Heart left ventricle (tissue), 16 donors: ENCODE measurements at regions of chr11 and their contacts with region 1.

Region 1: GRCh38 chr11:112086422-112087191 is at the starts of genes SDHD and TIMM8B:
- DNase-seq: peak; percentile 96 to 97 (median 96)
- ATAC-seq: peak; percentile 93 to 97 (median 94)
- H3K4me3 ChIP-seq: peak within 1 kb of the TSS; percentile 74 to 96 (median 90)
- H3K27ac ChIP-seq: peak within 1 kb of the TSS; percentile 55 to 95 (median 88)
- H3K4me1 ChIP-seq: peaks cover 3 to 50% (median 38%) of the 10 kb centered on the region in 12 donors
- H3K27me3 ChIP-seq: no peaks in the 10 kb centered on the region
- CTCF ChIP-seq: peak in 8 of 12 donors; percentile 6 to 39 (median 22)
- POLR2A ChIP-seq: peak in 1 of 2 donors; percentile 65
- total RNA-seq, gene SDHD: 173 to 314 (median 245) TPM
- total RNA-seq, gene TIMM8B: 113 to 203 (median 148) TPM

Region 2: DNA sequence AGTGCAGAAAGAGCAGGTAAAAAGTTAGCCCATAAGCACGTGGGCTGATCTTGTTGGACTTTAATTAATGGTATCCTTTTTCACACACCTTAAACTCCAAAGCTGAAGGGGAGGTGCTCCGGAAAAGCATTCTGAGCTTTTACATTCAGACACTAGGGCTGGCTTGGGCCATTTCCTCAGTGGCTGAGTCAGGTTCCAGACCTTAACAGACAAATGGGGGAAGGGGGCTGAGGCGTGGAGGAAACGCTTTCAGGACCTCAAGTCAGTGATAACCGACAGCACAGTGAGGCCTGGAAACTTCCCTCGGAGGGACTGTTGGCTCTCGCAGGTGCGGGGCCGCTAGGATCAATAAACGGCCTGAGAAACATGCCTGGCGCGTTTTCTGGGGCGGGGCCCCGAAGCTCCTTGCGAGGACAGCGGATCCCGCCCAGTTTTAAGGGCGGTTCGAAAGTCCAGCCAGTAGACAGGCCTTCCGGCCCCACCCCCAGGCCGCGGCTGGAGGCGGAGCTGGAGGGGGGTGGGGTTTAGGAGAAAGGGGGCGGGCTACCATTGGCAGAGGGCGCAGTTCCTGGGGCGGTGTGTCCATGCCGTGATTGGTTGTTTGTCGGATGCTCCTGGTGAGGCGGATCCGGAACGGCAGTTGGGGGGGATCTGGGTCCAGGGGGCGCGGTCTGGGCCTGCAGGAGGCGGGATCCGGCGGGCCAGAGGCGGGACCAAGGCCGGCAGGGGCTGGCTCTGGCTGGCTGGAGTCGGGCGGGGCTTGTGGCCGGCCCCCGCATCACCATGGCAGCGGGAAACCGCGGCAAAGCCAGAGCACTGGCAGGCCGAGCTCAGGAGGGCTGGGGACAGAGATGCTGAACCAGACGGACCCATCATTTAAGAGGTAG is 159.9 kb before region 1 on chr11:
- intact Hi-C with region 1: loop called in 3 of 10 experiments (anchors 5 to 10 kb)
- DNase-seq: peak; percentile 97 to 98 (median 97)
- ATAC-seq: peak; percentile 93 to 97 (median 96)
- H3K4me3 ChIP-seq: peak overlapping the region; percentile 2 to 66 (median 52)
- H3K27ac ChIP-seq: peak overlapping the region; percentile 51 to 93 (median 86)
- H3K4me1 ChIP-seq: peaks cover 0 to 52% (median 36%) of the 10 kb centered on the region in 12 donors
- H3K27me3 ChIP-seq: no peaks in the 10 kb centered on the region
- CTCF ChIP-seq: peak in 1 of 12 donors; percentile 9
- POLR2A ChIP-seq: peak in 1 of 2 donors; percentile 72

Region 3: DNA sequence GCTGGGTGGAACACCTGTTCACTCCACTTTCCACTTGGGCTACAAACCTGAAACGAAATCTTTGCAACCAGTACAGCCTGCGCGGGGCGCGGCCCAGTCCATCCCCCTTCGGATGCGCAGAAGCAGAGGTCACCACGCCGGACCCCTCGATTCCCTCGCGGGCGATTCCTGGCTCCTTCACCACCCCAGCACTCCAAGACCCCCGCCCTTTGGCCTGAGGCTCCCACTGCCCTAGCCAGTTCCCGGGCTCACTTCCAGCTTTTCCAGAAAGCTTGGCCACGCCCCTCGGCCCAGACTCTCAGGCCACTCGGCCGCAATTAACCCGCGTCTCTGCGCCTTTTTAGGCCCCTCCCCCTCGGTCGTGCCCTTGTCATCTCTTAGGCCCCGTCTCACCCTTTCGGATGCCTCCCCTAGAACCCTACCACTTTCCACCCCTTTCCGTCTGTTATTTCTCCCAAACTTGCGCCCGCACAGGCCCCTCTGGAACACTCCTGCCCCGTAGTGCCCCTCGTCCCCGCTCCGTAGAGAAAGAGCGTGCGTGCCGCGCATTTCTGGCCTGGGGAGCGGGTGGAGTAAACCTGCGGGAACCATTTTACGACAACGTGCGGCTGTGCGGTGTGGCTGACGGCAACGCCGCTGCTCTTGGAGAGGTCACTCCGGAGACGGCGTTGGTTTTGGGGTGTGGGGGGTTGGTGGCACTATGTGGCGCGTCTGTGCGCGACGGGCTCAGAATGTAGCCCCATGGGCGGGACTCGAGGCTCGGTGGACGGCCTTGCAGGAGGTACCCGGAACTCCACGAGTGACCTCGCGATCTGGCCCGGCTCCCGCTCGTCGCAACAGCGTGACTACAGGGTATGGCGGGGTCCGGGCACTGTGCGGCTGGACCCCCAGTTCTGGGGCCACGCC is 61.6 kb before region 1 on chr11 and contains the start of gene DLAT:
- intact Hi-C with region 1: loop called in 2 of 10 experiments (anchors 5 to 10 kb)
- DNase-seq: peak; percentile 88 to 94 (median 92)
- ATAC-seq: peak; percentile 89 to 94 (median 93)
- H3K4me3 ChIP-seq: peak within 1 kb of the TSS; percentile 66 to 97 (median 88)
- H3K27ac ChIP-seq: peak within 1 kb of the TSS; percentile 85 to 96 (median 92)
- H3K4me1 ChIP-seq: peaks cover 0 to 31% (median 16%) of the 10 kb centered on the region in 12 donors
- H3K27me3 ChIP-seq: no peaks in the 10 kb centered on the region
- CTCF ChIP-seq: no peak
- POLR2A ChIP-seq: peak in 1 of 2 donors; percentile 48
- total RNA-seq, gene DLAT: 110 to 179 (median 160) TPM

Region 4: DNA sequence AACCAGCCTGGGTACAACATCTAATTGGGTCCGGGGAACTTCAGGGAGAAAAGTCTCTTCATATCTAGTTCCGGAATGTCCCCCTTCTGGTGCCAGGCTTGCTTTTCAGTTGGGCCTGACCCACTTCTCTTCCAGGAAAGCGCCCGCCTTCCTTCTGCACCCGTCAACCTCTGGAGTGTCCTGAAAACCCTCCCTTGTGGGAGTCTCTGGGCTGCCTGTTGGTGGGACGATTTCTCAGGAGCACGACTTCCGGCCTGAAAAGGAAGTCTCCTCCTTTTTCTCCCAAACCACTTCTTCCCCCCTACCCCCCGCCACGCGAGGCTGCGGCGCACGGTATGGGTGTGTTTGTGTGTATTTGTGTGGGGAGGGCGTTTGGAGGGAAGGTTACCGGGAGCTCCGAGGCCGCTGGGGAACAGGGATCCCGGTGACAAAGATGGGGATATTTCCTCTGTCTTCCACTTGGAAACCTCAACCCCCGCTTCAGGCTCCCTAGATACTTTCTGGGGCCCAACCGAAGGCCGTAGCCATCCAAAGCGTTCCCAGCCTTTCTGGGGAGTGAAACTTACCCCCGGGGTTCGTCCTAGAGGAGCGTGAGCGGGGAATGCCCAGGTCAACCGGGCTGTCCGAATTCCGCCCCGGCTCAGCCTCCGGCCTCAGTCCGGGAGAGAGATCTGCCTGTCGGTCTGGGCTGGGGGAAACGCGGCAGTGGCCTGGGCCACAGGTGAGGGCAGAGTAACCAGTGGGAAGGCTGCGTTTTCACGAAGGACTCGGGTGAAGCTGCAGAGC is 12.4 kb before region 1 on chr11 and contains the start of gene NKAPD1:
- intact Hi-C with region 1: loop called in 1 of 10 experiments (anchors 1 kb)
- DNase-seq: peak; percentile 73 to 79 (median 76)
- ATAC-seq: peak; percentile 83 to 94 (median 94)
- H3K4me3 ChIP-seq: peak within 1 kb of the TSS; percentile 46 to 96 (median 80)
- H3K27ac ChIP-seq: peak within 1 kb of the TSS; percentile 82 to 95 (median 88)
- H3K4me1 ChIP-seq: peaks cover 0 to 25% (median 17%) of the 10 kb centered on the region in 12 donors
- H3K27me3 ChIP-seq: no peaks in the 10 kb centered on the region
- CTCF ChIP-seq: peak in 1 of 12 donors; percentile 13
- POLR2A ChIP-seq: peak in 1 of 2 donors; percentile 36
- total RNA-seq, gene NKAPD1: 5.1 to 12.5 (median 7.6) TPM